PC-9 (cell line): ENCODE measurements at regions of chr11 and their contacts with region 1.

Region 1: DNA sequence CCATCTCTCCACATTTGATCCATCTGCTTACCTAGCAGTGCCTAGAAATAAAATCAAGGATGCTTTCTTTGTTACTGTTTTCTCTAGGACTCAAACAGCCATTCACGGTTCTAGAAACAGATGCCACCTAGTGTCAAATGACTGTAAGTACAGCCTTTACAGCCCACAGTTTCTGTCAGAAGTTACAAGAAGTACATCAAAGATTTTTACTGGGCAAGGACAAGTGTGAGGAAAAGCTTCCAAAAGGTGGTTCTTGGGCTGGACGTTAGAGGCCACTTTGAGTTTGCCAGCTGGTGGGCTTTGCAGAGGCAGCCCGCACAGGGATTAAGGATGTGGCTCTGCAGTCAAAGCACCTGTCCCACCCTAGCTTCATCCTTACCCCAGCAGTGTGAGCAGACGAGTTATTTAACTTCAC is 6.9 kb downstream of the KMT5B start:
- DNase-seq: peak; percentile 34 to 69
- H3K4me3 ChIP-seq: no peak overlapping the region
- H3K27ac ChIP-seq: no peak overlapping the region
- H3K4me1 ChIP-seq: peaks cover 24% of the 10 kb centered on the region
- H3K27me3 ChIP-seq: no peaks in the 10 kb centered on the region
- CTCF ChIP-seq: peak; percentile 94

Region 2: DNA sequence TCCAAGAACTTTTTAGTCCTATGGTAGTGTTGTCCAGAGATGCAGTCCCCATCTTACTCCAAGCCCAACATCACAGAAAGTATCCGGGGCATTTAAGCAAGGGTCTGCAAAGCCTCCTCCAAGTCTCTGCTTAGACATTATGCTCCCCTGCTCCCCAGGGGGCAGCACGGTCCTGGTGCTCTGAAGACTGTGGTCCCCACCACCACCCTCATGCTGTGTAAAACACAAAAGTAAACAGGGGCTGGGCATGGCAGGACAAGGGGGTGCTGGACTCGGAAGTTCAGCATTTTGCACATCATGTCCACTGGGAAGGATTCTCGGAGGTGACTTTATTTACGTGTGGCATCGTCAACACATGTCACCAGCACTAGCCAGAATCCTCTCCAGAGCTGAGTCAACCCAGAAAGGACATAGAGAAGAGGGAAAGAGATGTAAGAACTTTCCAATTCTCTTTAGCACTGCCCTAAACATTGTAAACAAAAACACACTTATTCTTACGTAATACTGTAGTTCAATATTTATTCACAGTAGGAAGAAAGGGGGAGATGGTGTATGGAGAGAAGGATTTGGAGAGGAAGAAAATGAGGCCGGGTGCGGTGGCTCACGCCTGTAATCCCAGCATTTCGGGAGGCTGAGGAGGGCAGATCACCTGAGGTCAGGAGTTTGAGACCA is 129.7 kb before region 1 on chr11:
- CTCF ChIA-PET with region 1: no interaction called
- POLR2A ChIA-PET with region 1: no interaction called
- intact Hi-C with region 1: loop called (anchors 5 kb)
- DNase-seq: no peak
- H3K4me3 ChIP-seq: no peak overlapping the region
- H3K27ac ChIP-seq: no peak overlapping the region
- H3K4me1 ChIP-seq: peaks cover 14% of the 10 kb centered on the region
- H3K27me3 ChIP-seq: no peaks in the 10 kb centered on the region
- CTCF ChIP-seq: no peak

Region 3: GRCh38 chr11:68127714-68128681 is 78.2 kb before region 1 on chr11:
- CTCF ChIA-PET with region 1: interaction called, 10 read pairs
- POLR2A ChIA-PET with region 1: interaction called, 4 read pairs
- intact Hi-C with region 1: no loop called
- DNase-seq: peak; percentile 86 to 95
- H3K4me3 ChIP-seq: peak overlapping the region; percentile 57
- H3K27ac ChIP-seq: peak overlapping the region; percentile 97
- H3K4me1 ChIP-seq: peaks cover 81% of the 10 kb centered on the region
- H3K27me3 ChIP-seq: no peaks in the 10 kb centered on the region
- CTCF ChIP-seq: no peak